SK-N-SH (cell line): ENCODE measurements at regions of chr7 and their contacts with region 1.

Region 1: DNA sequence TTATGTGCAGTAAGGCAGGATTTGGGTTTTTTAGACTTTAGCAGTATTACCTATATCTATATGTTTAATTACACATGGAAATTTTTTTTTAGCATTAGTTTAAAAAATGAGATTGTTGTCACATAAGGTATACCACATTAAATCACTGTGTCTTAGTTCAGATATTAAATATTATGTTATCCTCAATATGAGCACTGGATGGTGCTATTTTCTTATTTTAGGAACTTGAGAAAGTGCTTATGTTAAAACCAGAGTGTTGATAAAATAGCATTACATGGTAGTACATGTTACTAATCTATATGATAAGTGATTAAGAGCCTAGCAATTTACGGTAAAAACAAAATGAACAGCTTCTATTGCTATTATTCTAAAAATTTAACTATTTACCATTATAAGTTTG is 28.8 kb downstream of the MIOS start:
- DNase-seq: peak; percentile 58
- H3K4me3 ChIP-seq: no peak overlapping the region
- H3K27ac ChIP-seq: peak overlapping the region in 1 of 2 experiments; percentile 40; a peak in 2 of 4 replicates
- H3K4me1 ChIP-seq: no peaks in the 10 kb centered on the region
- H3K27me3 ChIP-seq: no peaks in the 10 kb centered on the region
- CTCF ChIP-seq: peak; percentile 74
- EP300 ChIP-seq: no peak
- RAD21 ChIP-seq: peak; percentile 86

Region 2: DNA sequence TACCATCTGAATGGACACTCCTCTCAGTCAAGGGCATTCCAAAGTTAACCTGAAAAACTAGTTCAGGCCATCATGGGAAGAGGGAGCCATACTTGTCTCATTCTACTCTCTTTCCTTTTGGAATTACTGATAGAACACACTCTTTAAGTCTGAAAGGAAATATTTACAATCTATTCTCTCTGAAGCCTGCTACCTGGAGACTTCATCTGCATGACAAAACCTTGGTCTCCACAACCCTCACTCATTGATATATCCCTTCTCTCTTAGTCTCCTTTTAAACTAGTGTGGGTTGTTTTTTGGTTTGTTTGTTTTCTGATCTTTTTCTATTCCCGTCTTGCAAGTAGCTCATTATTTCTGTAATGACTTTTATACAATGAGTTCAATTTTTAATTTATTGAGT is 243.6 kb before region 1 on chr7:
- CTCF ChIA-PET with region 1: no interaction called
- POLR2A ChIA-PET with region 1: no interaction called
- DNase-seq: no peak
- H3K4me3 ChIP-seq: no peak overlapping the region
- H3K27ac ChIP-seq: no peak overlapping the region
- H3K4me1 ChIP-seq: no peaks in the 10 kb centered on the region
- H3K27me3 ChIP-seq: no peaks in the 10 kb centered on the region
- CTCF ChIP-seq: no peak
- EP300 ChIP-seq: no peak
- RAD21 ChIP-seq: no peak

Region 3: GRCh38 chr7:7581531-7582179 is 13.8 kb before region 1 on chr7:
- CTCF ChIA-PET with region 1: interaction called, 43 read pairs
- POLR2A ChIA-PET with region 1: no interaction called
- DNase-seq: no peak
- H3K4me3 ChIP-seq: no peak overlapping the region
- H3K27ac ChIP-seq: no peak overlapping the region; a peak in 1 of 4 replicates
- H3K4me1 ChIP-seq: peaks cover 0 to 24% of the 10 kb centered on the region in 2 experiments; a peak in 1 of 4 replicates
- H3K27me3 ChIP-seq: no peaks in the 10 kb centered on the region
- CTCF ChIP-seq: no peak
- EP300 ChIP-seq: no peak
- RAD21 ChIP-seq: no peak

Region 4: GRCh38 chr7:7614018-7614741 is 18.7 kb after region 1 on chr7:
- CTCF ChIA-PET with region 1: interaction called, 12 read pairs
- POLR2A ChIA-PET with region 1: no interaction called
- DNase-seq: no peak
- H3K4me3 ChIP-seq: no peak overlapping the region
- H3K27ac ChIP-seq: peak overlapping the region in 1 of 2 experiments; percentile 94; a peak in 2 of 4 replicates
- H3K4me1 ChIP-seq: peaks cover 0 to 39% of the 10 kb centered on the region in 2 experiments; a peak in 2 of 4 replicates
- H3K27me3 ChIP-seq: no peaks in the 10 kb centered on the region
- CTCF ChIP-seq: no peak
- EP300 ChIP-seq: no peak
- RAD21 ChIP-seq: no peak

Region 5: DNA sequence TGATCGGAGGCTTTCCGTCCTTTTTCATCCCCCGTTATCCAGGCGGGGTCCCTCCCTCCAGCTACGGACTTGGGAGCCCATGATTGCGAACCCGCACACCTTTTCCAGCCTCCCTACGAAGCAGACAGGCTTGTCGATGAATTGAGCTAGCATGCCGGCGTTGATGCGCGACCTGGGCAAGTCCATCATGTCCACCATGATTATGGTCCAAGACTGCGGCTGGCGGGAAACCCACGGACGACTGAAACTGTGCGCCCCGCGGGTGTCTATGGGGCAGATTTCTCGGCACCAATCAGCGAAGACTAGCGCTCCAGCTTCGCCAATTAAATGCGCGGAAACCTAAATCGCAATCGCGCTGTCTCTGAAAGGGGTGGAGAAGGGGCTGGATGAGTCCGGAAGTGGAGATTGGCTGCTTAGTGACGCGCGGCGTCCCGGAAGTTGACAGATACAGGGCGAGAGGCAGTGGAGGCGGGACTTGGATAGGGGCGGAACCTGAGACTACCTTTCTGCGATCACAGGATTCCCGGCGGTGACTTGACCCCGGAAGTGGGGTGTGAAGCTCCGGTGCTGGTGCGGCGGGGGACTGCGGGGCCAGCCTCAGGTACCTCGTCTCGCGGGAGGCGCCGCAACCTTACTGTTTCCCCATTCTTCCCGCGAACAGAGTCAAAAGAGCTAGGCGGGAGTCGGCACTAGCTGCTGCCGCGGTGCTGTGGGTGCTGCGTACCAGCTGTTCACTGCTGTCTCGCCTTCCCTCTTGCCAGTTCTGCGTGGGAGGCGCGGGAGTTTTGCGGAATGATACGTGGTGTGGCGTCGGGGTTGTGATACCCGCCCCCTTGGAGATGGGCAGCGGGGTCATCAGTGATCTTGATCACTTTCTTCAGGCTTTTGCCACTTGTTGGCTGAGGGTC is 45.0 kb after region 1 on chr7 and contains the start of gene UMAD1:
- CTCF ChIA-PET with region 1: interaction called, 19 read pairs
- POLR2A ChIA-PET with region 1: no interaction called
- DNase-seq: peak; percentile 93
- H3K4me3 ChIP-seq: peak within 1 kb of the TSS; percentile 79 to 85
- H3K27ac ChIP-seq: peak within 1 kb of the TSS; percentile 80 to 96
- H3K4me1 ChIP-seq: peaks cover 0 to 21% of the 10 kb centered on the region in 2 experiments; a peak in 2 of 4 replicates
- H3K27me3 ChIP-seq: no peaks in the 10 kb centered on the region
- CTCF ChIP-seq: no peak
- EP300 ChIP-seq: peak in 1 of 2 experiments; percentile 3; a peak in 1 of 4 replicates
- RAD21 ChIP-seq: no peak
- polyA plus RNA-seq, gene UMAD1: 13.9 and 17.6 TPM in 2 replicates

Region 6: DNA sequence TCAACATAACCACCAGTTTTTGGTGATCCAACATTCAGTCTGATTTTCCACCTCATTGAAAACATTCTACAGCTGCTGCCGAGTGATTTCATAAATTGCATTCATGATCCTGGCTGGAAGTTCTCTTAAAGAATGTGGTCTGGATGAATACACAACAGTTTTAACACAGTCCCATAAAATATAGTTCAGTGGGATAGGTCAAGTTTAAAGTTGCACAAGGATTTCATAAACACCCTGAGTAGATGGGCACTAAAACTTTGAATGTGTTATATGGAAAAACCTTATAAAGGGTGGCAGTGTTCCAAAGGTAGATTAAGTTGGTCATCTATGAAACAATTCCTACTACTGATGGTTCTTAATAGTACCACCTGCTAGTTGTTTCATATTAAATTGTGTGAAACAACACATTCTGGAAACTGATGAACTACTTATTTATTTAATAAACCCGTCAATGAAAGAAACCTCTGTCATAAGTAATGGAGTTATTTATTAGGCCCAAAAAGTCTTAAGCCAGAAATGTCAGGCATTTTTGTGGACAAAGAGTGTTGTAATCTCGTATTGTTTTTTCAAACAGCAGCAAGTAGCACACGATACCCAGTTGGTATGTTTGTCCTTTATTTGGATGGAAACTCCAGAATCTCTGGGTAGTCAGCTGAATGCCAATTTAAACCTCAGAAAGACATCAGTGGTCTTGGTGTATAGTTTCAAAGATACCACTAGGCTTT is 137.3 kb after region 1 on chr7:
- CTCF ChIA-PET with region 1: no interaction called
- POLR2A ChIA-PET with region 1: no interaction called
- DNase-seq: no peak
- H3K4me3 ChIP-seq: no peak overlapping the region
- H3K27ac ChIP-seq: no peak overlapping the region
- H3K4me1 ChIP-seq: peaks cover 0 to 3% of the 10 kb centered on the region in 2 experiments; a peak in 2 of 4 replicates
- H3K27me3 ChIP-seq: no peaks in the 10 kb centered on the region
- CTCF ChIP-seq: no peak
- EP300 ChIP-seq: no peak
- RAD21 ChIP-seq: no peak

Region 7: GRCh38 chr7:8190119-8190895 is 594.9 kb after region 1 on chr7:
- CTCF ChIA-PET with region 1: interaction called, 22 read pairs
- POLR2A ChIA-PET with region 1: no interaction called
- DNase-seq: peak; percentile 60
- H3K4me3 ChIP-seq: no peak overlapping the region
- H3K27ac ChIP-seq: peak overlapping the region in 1 of 2 experiments; percentile 60; a peak in 2 of 4 replicates
- H3K4me1 ChIP-seq: peaks cover 0 to 31% of the 10 kb centered on the region in 2 experiments; a peak in 2 of 4 replicates
- H3K27me3 ChIP-seq: no peaks in the 10 kb centered on the region
- CTCF ChIP-seq: peak; percentile 89
- EP300 ChIP-seq: 0 out of 4 replicates have a peak, but pooled peaks of 1 of the 2 experiments have one; percentile 10
- RAD21 ChIP-seq: peak; percentile 82

Region 8: GRCh38 chr7:8217200-8218068 is 622.0 kb after region 1 on chr7:
- CTCF ChIA-PET with region 1: interaction called, 36 read pairs
- POLR2A ChIA-PET with region 1: no interaction called
- DNase-seq: peak; percentile 28
- H3K4me3 ChIP-seq: no peak overlapping the region; a peak in 1 of 4 replicates
- H3K27ac ChIP-seq: peak overlapping the region in 1 of 2 experiments; percentile 93; a peak in 2 of 4 replicates
- H3K4me1 ChIP-seq: peaks cover 0 to 67% of the 10 kb centered on the region in 2 experiments; a peak in 2 of 4 replicates
- H3K27me3 ChIP-seq: no peaks in the 10 kb centered on the region
- CTCF ChIP-seq: peak; percentile 90
- EP300 ChIP-seq: no peak
- RAD21 ChIP-seq: peak; percentile 89